Activated T-helper 2 cell treated with anti-CD3 and anti-CD28 coated beads, Interferon-gamma antibody, Interleukin-2, Interleukin-4, amounts not matched to agents 10 μg/mL and 5 μg/mL and 100 μg/mL, durations not matched to agents 14 hours and 24 hours and 36 hours (primary cell): ENCODE measurements at regions of chr3 and their contacts with region 1.

Region 1: DNA sequence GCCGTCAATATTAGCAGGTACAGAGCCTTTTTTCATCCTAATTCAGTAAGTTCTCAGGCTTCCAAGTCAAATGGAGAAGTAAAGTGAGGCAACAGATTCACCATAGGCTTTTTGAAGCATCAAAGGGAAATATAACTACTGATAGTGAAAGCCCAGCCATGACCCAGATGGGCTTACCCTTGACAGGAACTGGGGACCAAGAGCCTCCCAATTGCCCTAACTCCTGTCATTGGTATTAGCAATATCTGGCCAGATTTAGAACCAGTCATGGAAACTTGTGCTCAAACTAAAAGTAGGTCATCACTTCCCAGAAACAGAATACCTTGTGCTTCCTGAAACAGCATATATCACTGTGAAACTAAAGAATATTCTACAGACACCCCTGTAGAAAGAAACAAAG is 33.0 kb downstream of the NME9 start:
- DNase-seq: no peak
- H3K4me3 Mint-ChIP-seq: no peak overlapping the region
- H3K27ac Mint-ChIP-seq: no peak overlapping the region
- H3K4me1 Mint-ChIP-seq: peaks cover 13% of the 10 kb centered on the region
- H3K27me3 Mint-ChIP-seq: no peaks in the 10 kb centered on the region

Region 2: DNA sequence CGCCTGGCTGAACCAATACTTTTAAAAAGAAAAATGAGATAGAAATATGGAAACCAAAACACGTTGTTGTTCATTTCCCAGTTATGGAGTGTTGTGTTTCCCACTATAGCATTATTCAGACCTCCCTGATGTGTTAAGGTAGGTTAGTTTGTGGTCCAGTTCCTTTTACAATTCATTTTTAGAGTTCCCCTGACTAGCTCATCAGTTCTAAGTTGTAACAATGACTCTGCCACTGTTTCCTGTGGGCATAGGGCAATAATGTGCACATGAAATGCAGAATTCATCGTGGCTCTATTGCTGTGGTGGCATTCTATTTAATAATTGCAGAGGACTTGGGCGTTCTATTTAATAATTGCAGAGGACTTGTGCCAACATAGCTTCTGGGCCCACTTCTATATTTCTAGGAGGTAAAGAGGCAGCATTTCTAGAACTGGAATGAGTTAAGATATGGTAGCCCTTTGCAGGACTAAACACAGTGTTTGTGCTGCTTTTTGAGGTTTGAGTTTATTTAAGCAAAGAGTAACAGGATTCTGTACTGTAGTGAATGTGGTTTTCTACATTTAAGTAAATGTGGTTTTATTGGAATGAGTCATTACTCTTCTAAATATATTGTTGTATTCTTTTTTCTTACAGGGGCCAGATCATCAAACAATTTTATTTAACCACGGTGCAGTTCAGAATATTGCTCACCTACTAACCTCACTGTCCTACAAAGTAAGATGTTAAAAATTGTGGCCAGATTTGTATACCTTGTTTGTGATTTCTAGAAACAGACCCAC is 62.0 kb before region 1 on chr3:
- intact Hi-C with region 1: loop called (anchors 2 kb)
- DNase-seq: no peak
- H3K4me3 Mint-ChIP-seq: no peak overlapping the region
- H3K27ac Mint-ChIP-seq: peak overlapping the region; percentile 40
- H3K4me1 Mint-ChIP-seq: peaks cover 13% of the 10 kb centered on the region
- H3K27me3 Mint-ChIP-seq: no peaks in the 10 kb centered on the region

Region 3: GRCh38 chr3:138271189-138271794 is 25.3 kb before region 1 on chr3:
- intact Hi-C with region 1: no loop called
- DNase-seq: no peak
- H3K4me3 Mint-ChIP-seq: no peak overlapping the region
- H3K27ac Mint-ChIP-seq: no peak overlapping the region
- H3K4me1 Mint-ChIP-seq: peaks cover 4% of the 10 kb centered on the region
- H3K27me3 Mint-ChIP-seq: no peaks in the 10 kb centered on the region